Adrenal gland (tissue), 19 donors: ENCODE measurements at regions of chr7 and their contacts with region 1.

Region 1: DNA sequence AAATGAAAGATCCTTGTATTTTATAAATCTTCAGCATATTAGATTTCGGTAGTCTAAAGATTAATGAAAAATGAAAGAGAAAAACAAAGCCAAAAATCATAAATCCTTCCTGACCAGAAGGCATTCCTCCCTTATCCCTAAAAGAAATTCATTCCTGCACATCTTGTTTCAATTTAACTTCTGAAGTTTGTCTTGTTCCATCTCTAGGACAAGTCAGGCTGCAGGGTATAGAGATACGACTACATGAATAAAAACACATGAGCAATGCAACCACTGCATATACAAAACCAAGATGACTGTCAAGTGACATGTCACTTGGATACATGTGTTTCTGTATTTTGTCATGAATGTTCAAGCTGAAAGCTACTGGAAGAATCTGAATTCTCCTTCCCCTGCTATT is 214.9 kb downstream of the JAZF1 start:
- DNase-seq: no peak
- H3K4me3 ChIP-seq: no peak overlapping the region
- H3K27ac ChIP-seq: no peak overlapping the region
- H3K4me1 ChIP-seq: peaks cover 0 to 7% of the 10 kb centered on the region in 2 donors
- H3K27me3 ChIP-seq: no peaks in the 10 kb centered on the region
- CTCF ChIP-seq: no peak
- POLR2A ChIP-seq: no peak

Region 2: GRCh38 chr7:27670676-27671075 is 295.0 kb before region 1 on chr7:
- intact Hi-C with region 1: no loop called
- DNase-seq: no peak
- H3K4me3 ChIP-seq: no peak overlapping the region
- H3K27ac ChIP-seq: no peak overlapping the region
- H3K4me1 ChIP-seq: no peaks in the 10 kb centered on the region
- H3K27me3 ChIP-seq: no peaks in the 10 kb centered on the region
- CTCF ChIP-seq: no peak
- POLR2A ChIP-seq: no peak

Region 3: GRCh38 chr7:28026259-28026658 is 60.6 kb after region 1 on chr7:
- intact Hi-C with region 1: loop called in 1 of 2 experiments (anchors 2 kb)
- DNase-seq: no peak
- H3K4me3 ChIP-seq: no peak overlapping the region
- H3K27ac ChIP-seq: no peak overlapping the region
- H3K4me1 ChIP-seq: peaks cover 0 to 9% of the 10 kb centered on the region in 2 donors
- H3K27me3 ChIP-seq: no peaks in the 10 kb centered on the region
- CTCF ChIP-seq: no peak
- POLR2A ChIP-seq: no peak